Dorsolateral prefrontal cortex (tissue), 120 donors: ENCODE measurements at regions of chr11 and their contacts with region 1.

Region 1: GRCh38 chr11:9748361-9748970 is 84.6 kb downstream of the SWAP70 start:
- DNase-seq: peak in 8 of 10 donors; percentile 38 to 74 (median 58)
- H3K4me3 ChIP-seq: peak overlapping the region in 1 of 59 donors; percentile 7
- H3K27ac ChIP-seq: peak overlapping the region in 27 of 59 donors; percentile 1 to 62 (median 33)
- H3K27me3 ChIP-seq: no peaks in the 10 kb centered on the region
- CTCF ChIP-seq: peak; percentile 20 to 88 (median 76)

Region 2: GRCh38 chr11:9534791-9535781 is 213.4 kb before region 1 on chr11:
- intact Hi-C with region 1: loop called (anchors 5 to 10 kb)
- DNase-seq: peak in 8 of 10 donors; percentile 14 to 63 (median 44)
- H3K4me3 ChIP-seq: no peak overlapping the region
- H3K27ac ChIP-seq: peak overlapping the region in 1 of 59 donors; percentile 23
- H3K27me3 ChIP-seq: no peaks in the 10 kb centered on the region
- CTCF ChIP-seq: peak; percentile 43 to 74 (median 63)

Region 3: DNA sequence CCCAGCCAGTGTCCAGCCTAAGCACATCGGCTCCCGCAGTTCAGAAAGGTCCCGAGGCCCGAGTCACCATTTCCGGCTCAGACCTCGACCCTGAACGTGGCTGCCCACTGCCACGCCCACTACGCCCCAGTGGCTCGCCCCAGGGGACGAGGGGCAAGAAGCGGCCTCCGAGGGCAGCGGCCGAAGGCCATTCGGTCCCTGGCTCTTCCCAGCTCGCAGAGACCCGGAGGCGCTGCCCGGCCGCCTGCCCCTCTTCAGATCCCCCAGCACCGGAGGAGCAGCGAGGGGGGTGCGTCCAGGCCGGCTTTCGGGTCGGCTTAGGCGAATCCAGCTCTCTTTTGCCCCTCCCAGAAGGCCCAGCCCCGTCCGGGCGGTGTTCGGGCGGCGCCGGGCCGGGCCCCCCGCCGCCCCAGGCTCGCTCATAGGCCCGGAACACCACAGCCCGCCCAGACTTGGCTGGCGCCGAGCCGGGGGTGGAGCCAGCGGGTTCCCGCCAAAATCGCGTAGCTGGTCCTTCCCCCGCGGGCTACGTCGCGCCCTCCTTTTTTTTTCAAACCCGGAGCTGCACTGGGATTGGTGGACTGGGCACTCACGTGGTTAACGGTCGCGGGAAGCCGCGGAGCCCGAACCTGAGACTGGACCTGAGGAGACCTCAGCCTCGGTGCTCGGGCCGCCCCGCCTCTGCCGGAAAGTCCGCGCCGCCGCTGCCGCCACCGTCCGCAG is 175.3 kb before region 1 on chr11 and contains the start of gene WEE1:
- intact Hi-C with region 1: no loop called
- DNase-seq: peak; percentile 84 to 94 (median 91)
- H3K4me3 ChIP-seq: peak within 1 kb of the TSS; percentile 44 to 96 (median 83)
- H3K27ac ChIP-seq: peak within 1 kb of the TSS in 52 of 59 donors; percentile 17 to 93 (median 78)
- H3K27me3 ChIP-seq: no peaks in the 10 kb centered on the region
- CTCF ChIP-seq: peak in 10 of 56 donors; percentile 3 to 38 (median 24)
- total RNA-seq, gene WEE1: 0.76 to 9.5 (median 2.7) TPM

Region 4: DNA sequence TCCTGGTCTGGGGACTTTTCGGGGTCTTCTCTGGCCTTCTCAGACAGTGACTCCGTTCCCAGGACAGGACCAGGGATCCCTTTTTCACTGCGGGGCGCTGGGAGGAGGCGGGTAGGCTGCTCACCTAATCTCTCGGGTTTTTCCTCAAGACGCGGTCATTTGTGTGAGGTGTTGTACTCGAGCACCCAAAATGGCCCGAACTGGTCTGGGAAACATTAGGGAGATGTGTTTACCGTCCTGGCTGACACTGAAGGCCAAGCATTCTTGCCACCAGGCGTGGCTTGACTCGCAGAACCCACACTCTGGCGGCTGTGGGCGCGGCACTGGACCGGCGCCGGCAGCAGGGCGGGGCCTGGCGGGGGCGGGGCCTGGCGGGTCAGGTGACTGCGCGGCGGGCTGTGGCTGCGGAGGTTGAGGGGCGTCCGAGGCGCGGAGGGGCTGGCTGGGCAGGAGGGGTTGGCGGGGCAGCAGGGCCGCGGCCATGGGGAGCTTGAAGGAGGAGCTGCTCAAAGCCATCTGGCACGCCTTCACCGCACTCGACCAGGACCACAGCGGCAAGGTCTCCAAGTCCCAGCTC is 84.7 kb before region 1 on chr11 and contains the start of gene SWAP70:
- intact Hi-C with region 1: loop called (anchors 5 to 10 kb)
- DNase-seq: peak; percentile 56 to 91 (median 74)
- H3K4me3 ChIP-seq: peak within 1 kb of the TSS; percentile 56 to 95 (median 88)
- H3K27ac ChIP-seq: peak within 1 kb of the TSS; percentile 44 to 95 (median 88)
- H3K27me3 ChIP-seq: peaks cover 0 to 6% (median 0%) of the 10 kb centered on the region in 45 donors
- CTCF ChIP-seq: peak in 47 of 56 donors; percentile 17 to 61 (median 37)
- total RNA-seq, gene SWAP70: 17.4 to 65.0 (median 26.7) TPM

Region 5: DNA sequence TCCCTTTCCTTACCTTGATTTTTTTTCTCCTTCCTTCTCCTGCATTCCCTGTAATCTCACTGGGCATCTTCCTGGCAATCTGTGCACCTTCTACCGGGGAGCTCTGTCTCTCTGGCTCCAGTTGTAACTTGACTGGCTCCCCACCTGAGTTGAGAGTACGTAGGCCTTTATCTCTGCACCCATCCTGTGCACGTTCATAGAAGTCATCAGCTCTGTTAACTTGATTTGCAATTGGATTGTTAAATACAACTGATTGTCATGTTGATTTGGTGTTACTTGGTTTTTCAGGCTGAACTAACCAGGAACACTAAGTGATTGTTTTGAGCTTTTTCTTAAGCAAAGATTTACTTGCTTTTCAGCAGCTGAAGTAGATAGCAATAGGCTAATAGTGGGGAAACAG is 72.8 kb before region 1 on chr11:
- intact Hi-C with region 1: loop called in 1 of 2 experiments (anchors 5 kb)
- DNase-seq: no peak
- H3K4me3 ChIP-seq: no peak overlapping the region
- H3K27ac ChIP-seq: peak overlapping the region in 23 of 59 donors; percentile 1 to 76 (median 21)
- H3K27me3 ChIP-seq: no peaks in the 10 kb centered on the region
- CTCF ChIP-seq: no peak

Region 6: GRCh38 chr11:9688716-9689511 is 59.6 kb before region 1 on chr11:
- intact Hi-C with region 1: loop called in 1 of 2 experiments (anchors 10 kb)
- DNase-seq: peak in 6 of 10 donors; percentile 19 to 65 (median 57)
- H3K4me3 ChIP-seq: peak overlapping the region in 42 of 59 donors; percentile 0 to 52 (median 28)
- H3K27ac ChIP-seq: peak overlapping the region; percentile 33 to 98 (median 95)
- H3K27me3 ChIP-seq: no peaks in the 10 kb centered on the region
- CTCF ChIP-seq: peak in 10 of 56 donors; percentile 5 to 35 (median 14)

Region 7: DNA sequence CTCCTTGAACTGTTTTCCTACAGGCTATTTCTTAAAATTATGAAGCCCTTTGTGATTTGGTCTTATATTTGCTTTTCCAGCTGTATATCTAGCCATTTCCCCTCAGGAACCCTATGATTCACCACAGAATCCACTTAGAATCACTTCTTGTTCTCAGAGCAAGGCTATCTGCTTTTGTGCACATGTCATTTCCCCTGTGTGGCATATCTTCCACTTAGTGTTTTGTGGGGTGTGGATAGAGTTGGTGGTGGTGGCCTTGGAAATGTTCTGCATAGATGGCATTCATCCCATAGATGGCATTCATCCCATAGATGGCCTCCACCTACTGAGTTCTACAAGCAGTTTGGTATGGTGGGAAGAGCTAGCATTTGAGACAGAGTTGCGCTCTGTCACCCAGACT is 39.9 kb before region 1 on chr11:
- intact Hi-C with region 1: no loop called
- DNase-seq: no peak
- H3K4me3 ChIP-seq: no peak overlapping the region
- H3K27ac ChIP-seq: peak overlapping the region in 12 of 59 donors; percentile 3 to 42 (median 17)
- H3K27me3 ChIP-seq: no peaks in the 10 kb centered on the region
- CTCF ChIP-seq: no peak